SK-N-SH (cell line): ENCODE measurements at regions of chr1 and their contacts with region 1.

Region 1: DNA sequence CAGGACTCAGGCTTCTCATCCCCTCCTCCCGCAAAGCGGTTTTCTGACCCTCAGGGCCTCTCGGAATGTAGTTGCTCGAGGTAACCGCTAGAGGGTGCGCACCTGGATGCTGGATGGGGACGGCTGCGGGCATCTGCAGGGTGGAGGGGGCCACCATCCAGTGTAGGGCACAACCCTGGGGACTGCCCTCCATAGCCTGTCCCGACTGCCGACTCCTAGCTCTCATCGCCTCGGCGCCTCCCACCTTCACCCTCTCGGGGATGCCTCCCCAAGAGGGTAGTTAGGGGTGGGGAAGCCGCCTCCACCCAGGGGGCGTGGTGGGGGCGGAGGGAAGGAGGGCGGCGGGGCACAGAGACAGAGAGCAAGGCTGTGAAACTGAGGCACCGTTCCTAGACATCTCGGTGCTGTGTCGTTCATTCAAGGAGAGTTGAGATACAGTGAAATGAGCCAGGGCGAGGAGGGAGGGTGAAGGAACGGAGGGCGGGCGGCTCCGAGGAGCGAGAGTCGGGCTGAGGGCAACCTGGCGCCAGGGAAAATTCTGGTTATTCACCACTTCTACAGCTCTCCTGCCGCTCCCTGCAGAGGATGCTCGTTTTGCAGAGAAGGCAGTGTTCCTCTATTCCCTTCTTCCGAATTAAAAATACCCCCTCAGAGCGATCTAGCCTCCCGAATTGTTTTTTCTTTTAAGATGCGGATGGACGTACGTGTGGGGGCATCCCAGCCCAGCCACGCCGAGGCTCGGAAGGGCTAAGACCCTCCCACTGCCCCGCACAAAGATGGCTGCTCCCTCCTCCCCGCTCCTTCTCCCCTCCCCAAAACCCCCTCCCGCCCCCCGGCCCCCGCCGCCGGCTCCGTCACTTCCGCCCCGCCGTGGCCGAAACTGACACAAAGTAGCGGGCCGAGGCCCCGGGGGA is at the start of gene ATP8B2:
- DNase-seq: peak; percentile 92
- H3K4me3 ChIP-seq: peak within 1 kb of the TSS; percentile 78 to 84
- H3K27ac ChIP-seq: peak within 1 kb of the TSS; percentile 88 to 92
- H3K4me1 ChIP-seq: peaks cover 21 to 43% of the 10 kb centered on the region in 2 experiments; a peak in 3 of 4 replicates
- H3K27me3 ChIP-seq: no peaks in the 10 kb centered on the region; the same call in 1 of the 2 replicates
- CTCF ChIP-seq: peak; percentile 96
- EP300 ChIP-seq: no peak
- RAD21 ChIP-seq: peak; percentile 51
- polyA plus RNA-seq, gene ATP8B2: 42.7 and 50.7 TPM in 2 replicates

Region 2: DNA sequence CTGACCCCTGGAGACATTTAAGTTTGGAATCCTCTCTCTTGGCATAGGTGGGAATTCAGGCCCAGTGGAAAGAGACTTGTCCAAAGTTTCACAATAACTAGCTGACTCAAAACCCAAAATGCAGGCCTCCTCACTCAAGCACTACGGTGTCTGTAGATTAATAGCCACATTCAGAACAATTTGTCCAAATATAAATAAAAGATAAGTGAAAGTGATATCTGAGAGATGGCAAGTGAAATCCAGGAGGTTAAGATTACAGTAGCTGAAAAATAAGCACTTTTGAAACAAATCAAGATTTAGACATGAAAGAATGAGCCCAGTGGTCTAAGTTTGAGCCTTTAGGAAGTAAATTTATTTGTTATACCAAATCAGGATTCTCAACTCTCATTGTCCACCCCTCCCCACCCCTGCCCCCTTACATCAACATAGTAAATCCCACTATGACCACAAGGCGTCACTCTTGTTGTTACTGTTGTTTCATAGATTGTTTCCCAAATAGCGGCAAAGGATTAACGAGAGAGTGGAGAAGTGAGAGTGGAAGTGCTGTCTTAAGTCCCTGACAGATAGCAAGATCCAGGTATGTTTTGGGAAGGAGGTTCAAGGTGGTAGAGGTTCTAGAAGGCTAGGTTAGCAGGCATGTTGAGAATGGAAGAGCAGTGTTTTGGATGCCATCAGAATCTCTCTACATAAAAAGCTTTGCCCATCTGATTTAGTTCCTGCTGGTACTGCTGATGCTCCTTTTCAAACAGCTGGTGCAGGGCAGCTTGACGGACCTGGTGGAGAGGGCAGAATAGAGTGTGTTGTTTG is 126.0 kb before region 1 on chr1:
- CTCF ChIA-PET with region 1: interaction called, 20 read pairs
- POLR2A ChIA-PET with region 1: no interaction called
- DNase-seq: peak; percentile 78
- H3K4me3 ChIP-seq: no peak overlapping the region
- H3K27ac ChIP-seq: no peak overlapping the region
- H3K4me1 ChIP-seq: peaks cover 0 to 2% of the 10 kb centered on the region in 2 experiments; a peak in 1 of 4 replicates
- H3K27me3 ChIP-seq: no peaks in the 10 kb centered on the region
- CTCF ChIP-seq: peak; percentile 64
- EP300 ChIP-seq: no peak
- RAD21 ChIP-seq: peak; percentile 70

Region 3: DNA sequence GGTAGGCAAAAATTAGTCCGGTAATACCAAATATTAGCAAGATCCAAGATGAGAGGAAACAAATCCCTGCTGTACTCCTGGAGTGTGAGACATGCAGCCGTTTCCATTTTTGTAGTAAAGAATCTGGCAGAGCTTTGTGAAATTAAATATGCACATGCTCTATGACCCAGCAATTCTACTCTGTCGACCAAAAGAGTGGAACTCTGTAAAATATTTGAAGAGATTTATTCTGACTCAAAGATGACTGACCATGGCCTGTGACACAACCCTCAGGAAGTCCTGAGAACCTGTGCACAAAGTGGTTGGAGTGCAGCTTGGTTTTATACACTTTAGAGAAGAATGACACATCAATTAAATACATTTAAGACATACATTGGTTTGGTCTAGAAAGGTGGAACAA is 36.3 kb before region 1 on chr1:
- CTCF ChIA-PET with region 1: interaction called, 10 read pairs
- POLR2A ChIA-PET with region 1: no interaction called
- DNase-seq: no peak
- H3K4me3 ChIP-seq: no peak overlapping the region
- H3K27ac ChIP-seq: no peak overlapping the region
- H3K4me1 ChIP-seq: no peaks in the 10 kb centered on the region
- H3K27me3 ChIP-seq: no peaks in the 10 kb centered on the region
- CTCF ChIP-seq: no peak
- EP300 ChIP-seq: no peak
- RAD21 ChIP-seq: no peak

Region 4: GRCh38 chr1:154335025-154335714 is 10.2 kb after region 1 on chr1:
- CTCF ChIA-PET with region 1: interaction called, 99 read pairs
- POLR2A ChIA-PET with region 1: no interaction called
- DNase-seq: peak; percentile 88
- H3K4me3 ChIP-seq: peak overlapping the region in 1 of 2 experiments; percentile 10; a peak in 1 of 4 replicates
- H3K27ac ChIP-seq: peak overlapping the region; percentile 25 to 47; a peak in 3 of 4 replicates
- H3K4me1 ChIP-seq: peaks cover 0 to 7% of the 10 kb centered on the region in 2 experiments; a peak in 2 of 4 replicates
- H3K27me3 ChIP-seq: no peaks in the 10 kb centered on the region
- CTCF ChIP-seq: peak; percentile 92
- EP300 ChIP-seq: no peak
- RAD21 ChIP-seq: peak; percentile 77

Region 5: DNA sequence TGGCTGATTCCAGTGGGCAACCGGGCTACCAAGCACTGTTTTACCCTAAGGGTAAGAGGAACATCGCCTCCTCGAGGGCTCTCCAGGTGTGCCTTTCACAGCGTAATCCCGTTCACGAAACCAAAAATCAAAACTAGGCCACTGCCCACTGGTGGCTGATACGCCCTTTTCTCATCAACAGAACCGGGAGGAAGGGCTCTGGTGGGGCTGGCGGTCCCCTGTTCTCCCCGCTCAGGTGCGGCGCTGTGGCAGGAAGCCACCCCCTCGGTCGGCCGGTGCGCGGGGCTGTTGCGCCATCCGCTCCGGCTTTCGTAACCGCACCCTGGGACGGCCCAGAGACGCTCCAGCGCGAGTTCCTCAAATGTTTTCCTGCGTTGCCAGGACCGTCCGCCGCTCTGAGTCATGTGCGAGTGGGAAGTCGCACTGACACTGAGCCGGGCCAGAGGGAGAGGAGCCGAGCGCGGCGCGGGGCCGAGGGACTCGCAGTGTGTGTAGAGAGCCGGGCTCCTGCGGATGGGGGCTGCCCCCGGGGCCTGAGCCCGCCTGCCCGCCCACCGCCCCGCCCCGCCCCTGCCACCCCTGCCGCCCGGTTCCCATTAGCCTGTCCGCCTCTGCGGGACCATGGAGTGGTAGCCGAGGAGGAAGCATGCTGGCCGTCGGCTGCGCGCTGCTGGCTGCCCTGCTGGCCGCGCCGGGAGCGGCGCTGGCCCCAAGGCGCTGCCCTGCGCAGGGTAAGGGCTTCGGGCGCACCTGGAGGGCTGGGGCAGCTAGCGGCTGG is 80.2 kb after region 1 on chr1 and contains the start of gene IL6R:
- CTCF ChIA-PET with region 1: interaction called, 16 read pairs
- POLR2A ChIA-PET with region 1: no interaction called
- DNase-seq: peak; percentile 78
- H3K4me3 ChIP-seq: peak within 1 kb of the TSS; percentile 55 to 76
- H3K27ac ChIP-seq: peak within 1 kb of the TSS in 1 of 2 experiments; percentile 81; a peak in 2 of 4 replicates
- H3K4me1 ChIP-seq: peaks cover 3 to 12% of the 10 kb centered on the region in 2 experiments; a peak in 2 of 4 replicates
- H3K27me3 ChIP-seq: no peaks in the 10 kb centered on the region
- CTCF ChIP-seq: peak; percentile 61
- EP300 ChIP-seq: no peak
- RAD21 ChIP-seq: peak; percentile 43
- polyA plus RNA-seq, gene IL6R: 1.4 and 2.8 TPM in 2 replicates